Astrocyte of the cerebellum (primary cell): ENCODE measurements at regions of chr20 and their contacts with region 1.

Region 1: GRCh38 chr20:61353261-61354000 is 101.4 kb downstream of the CDH4 start:
- DNase-seq: peak; percentile 19
- H3K4me3 ChIP-seq: no peak overlapping the region
- CTCF ChIP-seq: no peak

Region 2: GRCh38 chr20:61387204-61387952 is 33.9 kb after region 1 on chr20:
- in situ Hi-C with region 1: loop called (anchors 5 kb)
- DNase-seq: peak; percentile 6
- H3K4me3 ChIP-seq: no peak overlapping the region
- CTCF ChIP-seq: no peak

Region 3: GRCh38 chr20:61422653-61423443 is 69.4 kb after region 1 on chr20:
- in situ Hi-C with region 1: loop called (anchors 5 kb)
- DNase-seq: no peak
- H3K4me3 ChIP-seq: no peak overlapping the region
- CTCF ChIP-seq: no peak